Psoas muscle (tissue), 8 donors: ENCODE measurements at regions of chr2 and their contacts with region 1.

Region 1: GRCh38 chr2:37005118-37005868 is 39.0 kb upstream of the STRN start:
- DNase-seq: no peak
- ATAC-seq: no peak
- H3K4me3 ChIP-seq: no peak overlapping the region
- H3K27ac ChIP-seq: no peak overlapping the region
- H3K4me1 ChIP-seq: no peaks in the 10 kb centered on the region
- H3K27me3 ChIP-seq: no peaks in the 10 kb centered on the region
- CTCF ChIP-seq: peak; percentile 30

Region 2: DNA sequence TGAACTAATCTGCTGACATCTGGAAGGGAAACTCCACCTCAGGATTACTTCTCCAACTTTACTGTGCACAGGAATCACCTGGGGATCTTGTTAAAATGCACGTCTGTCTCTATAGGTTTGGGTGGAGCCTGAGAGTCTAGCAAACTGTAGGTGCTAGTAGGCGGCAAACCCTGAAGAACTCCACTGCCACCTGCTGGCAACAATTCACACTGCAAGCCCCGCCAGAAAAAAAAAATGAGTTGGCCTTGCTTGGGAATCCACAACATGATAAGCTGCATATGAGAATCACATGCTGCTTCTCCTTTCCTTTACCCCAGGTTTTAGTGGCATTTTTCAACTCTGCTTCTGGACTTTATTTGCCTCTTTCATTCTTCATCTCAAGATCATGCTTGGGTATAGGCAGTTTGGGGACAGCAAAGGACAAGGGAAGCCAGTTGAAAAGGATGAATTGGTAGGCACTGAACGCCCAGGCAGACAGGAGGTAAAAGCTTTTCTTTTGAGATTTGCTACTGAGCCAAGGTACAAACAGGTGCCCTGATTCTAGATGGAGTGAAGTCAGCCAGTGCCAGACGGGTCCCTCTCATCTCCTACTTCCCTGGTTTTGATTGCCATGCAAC is 220.0 kb before region 1 on chr2:
- intact Hi-C with region 1: loop called in 1 of 2 experiments (anchors 5 kb)
- DNase-seq: peak; percentile 38 to 58
- ATAC-seq: peak in 3 of 4 donors; percentile 54 to 77 (median 67)
- H3K4me3 ChIP-seq: no peak overlapping the region
- H3K27ac ChIP-seq: no peak overlapping the region
- H3K4me1 ChIP-seq: no peaks in the 10 kb centered on the region
- H3K27me3 ChIP-seq: no peaks in the 10 kb centered on the region
- CTCF ChIP-seq: peak; percentile 95

Region 3: GRCh38 chr2:36889795-36890194 is 115.5 kb before region 1 on chr2:
- intact Hi-C with region 1: loop called in 1 of 2 experiments (anchors 10 kb)
- DNase-seq: no peak
- ATAC-seq: peak; percentile 81 to 96 (median 86)
- H3K4me3 ChIP-seq: no peak overlapping the region
- H3K27ac ChIP-seq: peak overlapping the region; percentile 42
- H3K4me1 ChIP-seq: no peaks in the 10 kb centered on the region
- H3K27me3 ChIP-seq: no peaks in the 10 kb centered on the region
- CTCF ChIP-seq: no peak